H1 (cell line): ENCODE measurements at regions of chr7 and their contacts with region 1.

Region 1: GRCh38 chr7:108497082-108497725 is 28.7 kb downstream of the PNPLA8 start:
- DNase-seq: peak in 1 of 2 experiments; percentile 62
- H3K4me3 ChIP-seq: no peak overlapping the region
- H3K27ac ChIP-seq: no peak overlapping the region
- H3K4me1 ChIP-seq: no peaks in the 10 kb centered on the region
- H3K27me3 ChIP-seq: no peaks in the 10 kb centered on the region
- CTCF ChIP-seq: peak in 2 of 3 experiments; percentile 58 to 75; a peak in 2 of 4 replicates
- EP300 ChIP-seq: no peak
- POLR2A ChIP-seq: no peak
- RAD21 ChIP-seq: peak; percentile 80 to 84

Region 2: GRCh38 chr7:108181073-108181985 is 315.9 kb before region 1 on chr7:
- CTCF ChIA-PET with region 1: interaction called, 11 read pairs
- POLR2A ChIA-PET with region 1: no interaction called
- DNase-seq: peak; percentile 64 to 70
- H3K4me3 ChIP-seq: peak overlapping the region in 1 of 4 experiments; percentile 46; a peak in 2 of 8 replicates
- H3K27ac ChIP-seq: no peak overlapping the region
- H3K4me1 ChIP-seq: no peaks in the 10 kb centered on the region; a peak in 3 of 7 replicates
- H3K27me3 ChIP-seq: no peaks in the 10 kb centered on the region
- CTCF ChIP-seq: peak in 2 of 3 experiments; percentile 39 to 52; a peak in 2 of 4 replicates
- EP300 ChIP-seq: peak in 1 of 2 experiments; percentile 41; a peak in 1 of 3 replicates
- POLR2A ChIP-seq: no peak
- RAD21 ChIP-seq: peak; percentile 73 to 82

Region 3: GRCh38 chr7:108459931-108460551 is 37.2 kb before region 1 on chr7:
- CTCF ChIA-PET with region 1: interaction called, 15 read pairs
- POLR2A ChIA-PET with region 1: no interaction called
- DNase-seq: no peak
- H3K4me3 ChIP-seq: no peak overlapping the region
- H3K27ac ChIP-seq: no peak overlapping the region
- H3K4me1 ChIP-seq: peaks cover 0 to 2% (median 0%) of the 10 kb centered on the region in 4 experiments; a peak in 1 of 7 replicates
- H3K27me3 ChIP-seq: peaks cover 3 to 25% (median 21%) of the 10 kb centered on the region in 4 experiments
- CTCF ChIP-seq: peak in 2 of 3 experiments; percentile 33 to 48; a peak in 2 of 4 replicates
- EP300 ChIP-seq: no peak
- POLR2A ChIP-seq: no peak
- RAD21 ChIP-seq: peak; percentile 62 to 64

Region 4: GRCh38 chr7:108468246-108468645 is 29.0 kb before region 1 on chr7:
- CTCF ChIA-PET with region 1: interaction called, 42 read pairs
- POLR2A ChIA-PET with region 1: no interaction called
- DNase-seq: no peak
- H3K4me3 ChIP-seq: no peak overlapping the region
- H3K27ac ChIP-seq: 0 out of 2 replicates have a peak overlapping the region, but pooled peaks have one; percentile 7
- H3K4me1 ChIP-seq: peaks cover 0 to 5% (median 2%) of the 10 kb centered on the region in 4 experiments; a peak in 2 of 7 replicates
- H3K27me3 ChIP-seq: no peaks in the 10 kb centered on the region
- CTCF ChIP-seq: no peak
- EP300 ChIP-seq: no peak
- POLR2A ChIP-seq: no peak
- RAD21 ChIP-seq: no peak

Region 5: GRCh38 chr7:108486291-108486966 is 10.8 kb before region 1 on chr7:
- CTCF ChIA-PET with region 1: interaction called, 26 read pairs
- POLR2A ChIA-PET with region 1: no interaction called
- DNase-seq: no peak
- H3K4me3 ChIP-seq: no peak overlapping the region
- H3K27ac ChIP-seq: no peak overlapping the region
- H3K4me1 ChIP-seq: no peaks in the 10 kb centered on the region
- H3K27me3 ChIP-seq: no peaks in the 10 kb centered on the region
- CTCF ChIP-seq: no peak
- EP300 ChIP-seq: no peak
- POLR2A ChIP-seq: no peak
- RAD21 ChIP-seq: no peak